ENCODE measurements at regions of chr1 and their contacts with region 1.

Region 1: DNA sequence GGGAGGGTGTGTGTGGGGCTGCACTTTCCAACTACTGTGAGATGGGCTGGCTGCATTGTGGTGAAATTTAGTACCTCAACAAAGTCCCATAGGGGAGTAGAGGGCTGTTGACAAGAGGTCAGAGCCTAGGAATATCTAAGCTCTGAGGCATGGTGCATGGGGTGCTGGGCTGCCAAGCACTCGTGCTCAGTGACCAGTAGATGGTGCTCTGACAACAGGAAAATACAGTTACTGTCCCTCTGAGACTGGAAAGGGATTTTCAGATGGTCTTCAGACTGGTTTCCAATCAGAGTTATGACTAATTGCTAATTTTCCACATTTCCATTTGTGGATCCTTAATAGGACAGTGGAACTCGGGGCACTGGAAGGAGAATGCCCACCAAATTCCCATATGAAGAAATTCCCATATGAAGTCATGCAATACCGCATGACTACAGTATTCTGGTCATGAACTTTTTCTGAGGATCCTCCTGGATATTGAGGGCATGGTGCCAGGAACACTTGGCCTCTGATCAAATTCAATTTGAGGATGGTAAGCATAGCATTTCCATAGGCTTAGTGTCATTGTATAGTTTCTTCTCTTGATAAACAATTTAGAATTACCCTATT is 4.1 kb upstream of the CACNA1E start:
- DNase-seq: peak in 41 of 42 donors; percentile 32 to 87 (median 68)

Region 2: DNA sequence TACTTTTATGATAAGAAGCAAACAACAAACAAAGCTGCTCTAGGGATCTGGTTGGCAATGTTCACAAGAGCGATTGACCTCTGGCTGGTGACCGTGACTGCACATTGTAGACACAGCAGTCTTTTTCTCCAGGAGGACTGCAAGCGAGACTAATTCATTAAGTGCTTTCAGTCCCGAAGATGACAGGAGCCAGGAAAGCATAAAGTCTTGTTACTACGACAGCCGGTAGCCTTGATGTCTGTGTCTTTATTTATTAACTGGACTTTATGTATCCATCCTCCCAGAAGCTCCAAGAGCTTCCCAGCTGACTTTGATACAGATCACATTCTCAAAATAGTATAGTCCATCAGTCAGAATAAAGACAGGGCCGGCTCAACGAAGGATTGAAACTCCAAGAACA is 1717.9 kb before region 1 on chr1:
- intact Hi-C with region 1: no loop called
- DNase-seq: no peak

Region 3: DNA sequence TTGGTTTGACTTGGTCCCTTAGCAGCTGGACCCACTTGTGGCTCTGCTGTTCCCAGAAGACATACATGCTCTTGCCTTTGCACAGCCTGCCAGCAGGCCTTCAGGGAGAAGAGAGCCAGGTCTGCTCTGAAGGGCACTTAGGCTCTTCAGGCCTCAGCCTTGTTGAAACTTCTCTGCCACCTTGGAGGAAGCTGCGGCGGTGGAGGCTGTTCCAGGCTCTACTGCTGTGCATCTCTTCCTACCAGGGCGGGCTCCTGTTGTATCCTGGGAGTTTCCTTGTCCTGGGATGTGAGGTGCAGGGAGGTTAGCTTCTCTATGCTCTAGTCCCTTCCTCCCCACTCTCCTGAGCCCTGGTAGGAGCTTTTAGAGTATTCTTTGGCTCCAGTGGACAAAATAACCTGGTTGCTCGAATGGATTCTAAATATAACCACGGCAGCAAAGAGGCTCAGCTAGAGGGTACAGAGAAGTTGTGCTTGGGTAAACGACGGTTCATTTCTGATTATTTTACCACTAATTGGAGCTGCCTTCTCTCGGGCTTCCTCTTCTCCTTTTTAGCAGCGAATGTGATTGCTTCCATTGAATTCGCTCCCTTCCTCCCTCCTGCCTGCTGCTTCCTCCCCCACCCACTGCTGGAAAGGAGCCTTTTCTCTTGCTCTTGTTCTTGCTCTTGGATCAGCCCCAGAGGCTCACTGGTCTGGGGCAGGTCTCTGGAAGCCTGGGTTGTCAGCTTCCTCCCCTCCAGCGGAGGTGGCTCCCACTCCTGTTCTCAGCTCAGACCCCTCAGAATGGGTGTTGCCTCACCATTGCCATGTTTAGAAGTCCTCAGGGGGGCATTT is 122.5 kb before region 1 on chr1:
- intact Hi-C with region 1: no loop called
- DNase-seq: peak in 6 of 42 donors; percentile 14 to 42 (median 23)

Region 4: DNA sequence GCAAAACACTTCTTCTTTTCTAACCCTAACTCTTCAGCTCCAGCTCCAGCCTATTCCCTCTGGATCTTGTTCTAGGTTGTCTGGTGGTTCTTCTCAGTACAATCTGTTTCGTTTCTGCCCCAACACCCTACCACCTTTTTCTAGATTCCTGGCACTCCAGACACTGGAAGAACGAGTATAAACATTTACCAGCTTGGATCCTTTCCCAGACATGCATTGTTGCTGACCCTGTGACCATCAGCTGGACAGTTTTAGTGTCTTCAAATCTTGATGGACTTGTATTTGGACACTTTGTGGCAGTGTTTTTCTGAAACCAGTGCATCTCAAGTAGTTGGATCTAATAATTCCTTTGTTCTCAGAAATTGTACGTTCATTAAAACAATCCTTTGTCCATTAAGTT is 26.5 kb before region 1 on chr1:
- intact Hi-C with region 1: no loop called
- DNase-seq: peak in 2 of 42 donors; percentile 4 to 14

Region 5: DNA sequence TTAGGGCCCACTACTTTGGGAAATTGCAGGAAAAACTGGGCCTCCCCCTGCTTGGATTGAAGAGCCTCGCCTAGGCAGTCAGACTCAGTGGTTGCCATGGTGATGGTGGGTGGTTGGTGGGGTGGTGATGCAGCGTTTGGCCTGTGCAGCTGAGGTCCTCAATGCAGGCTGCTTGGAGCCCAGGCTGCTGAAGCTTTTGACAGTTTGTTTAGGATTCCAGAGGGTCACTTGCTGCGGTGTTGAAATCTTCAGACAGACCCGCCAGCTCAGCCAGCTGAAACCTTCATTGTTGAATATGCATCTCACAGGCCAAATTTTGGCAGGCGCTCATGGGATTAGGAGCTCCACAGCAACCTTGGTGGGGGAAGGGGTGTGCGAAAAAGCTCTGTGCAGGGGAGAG is 72.0 kb after region 1 on chr1:
- intact Hi-C with region 1: loop called (anchors 10 kb)
- DNase-seq: peak; percentile 68 to 96 (median 84)

Region 6: GRCh38 chr1:181676269-181676668 is 197.0 kb after region 1 on chr1:
- intact Hi-C with region 1: loop called (anchors 5 kb)
- DNase-seq: peak; percentile 19 to 85 (median 64)

Region 7: DNA sequence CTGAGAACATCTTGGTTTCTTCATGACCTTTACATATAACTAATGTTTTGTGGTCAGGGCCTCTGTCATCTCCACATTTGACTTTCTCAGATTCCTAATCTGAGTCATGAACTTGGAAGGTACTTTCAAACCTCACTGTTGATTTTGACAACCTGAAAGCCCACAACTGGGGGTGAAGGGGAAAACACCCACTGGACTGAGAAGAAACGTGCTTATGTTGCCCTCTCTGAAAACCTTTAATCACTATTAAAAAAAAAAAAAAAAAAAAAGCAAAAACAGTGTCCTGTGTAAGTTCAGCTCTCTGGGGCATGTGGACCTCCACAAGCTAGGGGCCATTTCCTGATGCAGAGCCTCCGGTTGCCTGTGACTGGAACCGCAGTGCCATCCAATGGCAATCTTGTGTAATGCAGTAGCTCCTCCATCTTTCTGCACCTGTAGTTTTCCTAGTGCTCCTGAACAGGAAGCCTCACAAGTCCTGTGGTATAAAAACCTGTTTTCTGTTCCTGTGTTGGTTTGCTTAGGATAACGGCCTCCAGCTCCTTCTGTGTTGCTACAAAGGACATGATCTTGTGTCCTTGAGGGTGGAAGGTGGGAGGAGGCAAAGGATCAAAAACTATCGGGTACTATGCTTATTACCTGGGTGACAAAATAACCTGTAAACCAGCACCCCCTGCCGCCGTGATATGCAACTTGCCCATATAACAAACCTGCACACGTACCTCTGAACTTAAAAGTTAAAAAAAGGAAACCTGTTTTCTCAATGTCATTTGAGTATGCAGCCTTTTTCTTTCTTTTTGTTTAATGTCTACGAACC is 457.7 kb after region 1 on chr1:
- intact Hi-C with region 1: loop called (anchors 10 kb)
- DNase-seq: peak; percentile 44 to 89 (median 72)

Measured in head of caudate nucleus (tissue), 42 donors.